ENCODE measurements at regions of chr14 and their contacts with region 1.

Region 1: GRCh38 chr14:22570132-22570949 is 18.7 kb downstream of the DAD1 start:
- DNase-seq: peak; percentile 89 to 92
- H3K4me3 ChIP-seq: no peak overlapping the region
- H3K4me3 Mint-ChIP-seq: no peak overlapping the region
- H3K27ac Mint-ChIP-seq: peak overlapping the region; percentile 29
- H3K4me1 ChIP-seq: peaks cover 56% of the 10 kb centered on the region
- H3K4me1 Mint-ChIP-seq: peaks cover 40% of the 10 kb centered on the region
- H3K27me3 ChIP-seq: no peaks in the 10 kb centered on the region
- H3K27me3 Mint-ChIP-seq: no peaks in the 10 kb centered on the region
- CTCF ChIP-seq: peak; percentile 88 to 93

Region 2: GRCh38 chr14:22556990-22557623 is 13.2 kb before region 1 on chr14:
- CTCF ChIA-PET with region 1: interaction called, 62 read pairs
- POLR2A ChIA-PET with region 1: interaction called, 5 read pairs
- intact Hi-C with region 1: loop called (anchors 1 kb)
- DNase-seq: peak; percentile 86 to 90
- H3K4me3 ChIP-seq: peak overlapping the region; percentile 21
- H3K4me3 Mint-ChIP-seq: peak overlapping the region; percentile 47
- H3K27ac Mint-ChIP-seq: peak overlapping the region; percentile 95
- H3K4me1 ChIP-seq: peaks cover 53% of the 10 kb centered on the region
- H3K4me1 Mint-ChIP-seq: peaks cover 42% of the 10 kb centered on the region
- H3K27me3 ChIP-seq: no peaks in the 10 kb centered on the region
- H3K27me3 Mint-ChIP-seq: no peaks in the 10 kb centered on the region
- CTCF ChIP-seq: peak; percentile 86 to 99

Region 3: DNA sequence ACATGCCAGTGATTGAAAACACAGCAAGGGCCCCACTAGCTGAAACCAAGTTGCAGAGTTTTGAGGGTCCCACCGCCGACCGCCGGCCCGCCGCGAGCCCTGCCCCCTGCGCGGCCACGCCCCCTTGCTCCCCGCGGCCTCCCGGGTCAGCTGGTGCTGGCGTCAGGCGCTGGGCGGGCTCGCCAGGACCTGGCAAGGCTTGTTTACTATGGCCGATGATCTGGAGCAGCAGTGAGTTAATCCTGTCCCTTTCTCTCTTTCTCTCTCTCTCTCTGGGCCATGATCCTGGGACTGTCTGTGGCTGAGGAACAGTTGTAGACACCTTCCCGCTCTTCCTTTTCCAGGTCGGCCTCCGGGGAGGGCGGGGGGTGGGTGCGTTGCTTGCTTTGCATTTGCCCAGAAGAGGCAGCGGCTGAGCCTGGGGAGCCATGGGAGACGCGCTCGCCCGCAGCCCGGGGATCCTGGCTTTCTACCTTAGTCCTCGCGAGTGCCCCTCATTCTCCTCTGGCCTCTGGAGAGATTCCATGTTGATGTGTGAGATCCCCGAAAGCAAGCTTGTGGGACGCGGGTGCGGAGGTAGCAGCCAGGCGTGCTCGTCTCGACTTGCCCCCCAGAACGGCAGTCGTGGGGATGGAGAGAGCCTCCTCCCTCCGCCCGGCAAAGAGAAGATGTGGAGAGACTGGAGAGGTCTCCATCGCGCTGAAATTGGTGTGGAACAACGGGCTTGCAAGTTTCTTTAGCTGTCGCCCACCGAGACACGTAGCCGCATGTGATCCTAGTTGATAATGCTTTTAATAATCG is 28.0 kb after region 1 on chr14 and contains the start of gene ABHD4:
- CTCF ChIA-PET with region 1: interaction called, 9 read pairs
- POLR2A ChIA-PET with region 1: no interaction called
- intact Hi-C with region 1: loop called (anchors 2 kb)
- DNase-seq: peak; percentile 74 to 85
- H3K4me3 ChIP-seq: peak within 1 kb of the TSS; percentile 84
- H3K4me3 Mint-ChIP-seq: peak within 1 kb of the TSS; percentile 97
- H3K27ac Mint-ChIP-seq: peak within 1 kb of the TSS; percentile 94
- H3K4me1 ChIP-seq: peaks cover 55% of the 10 kb centered on the region
- H3K4me1 Mint-ChIP-seq: peaks cover 19% of the 10 kb centered on the region
- H3K27me3 ChIP-seq: no peaks in the 10 kb centered on the region
- H3K27me3 Mint-ChIP-seq: no peaks in the 10 kb centered on the region
- CTCF ChIP-seq: no peak
- total RNA-seq, gene ABHD4: 64.5 and 73.5 TPM in 2 replicates

Region 4: DNA sequence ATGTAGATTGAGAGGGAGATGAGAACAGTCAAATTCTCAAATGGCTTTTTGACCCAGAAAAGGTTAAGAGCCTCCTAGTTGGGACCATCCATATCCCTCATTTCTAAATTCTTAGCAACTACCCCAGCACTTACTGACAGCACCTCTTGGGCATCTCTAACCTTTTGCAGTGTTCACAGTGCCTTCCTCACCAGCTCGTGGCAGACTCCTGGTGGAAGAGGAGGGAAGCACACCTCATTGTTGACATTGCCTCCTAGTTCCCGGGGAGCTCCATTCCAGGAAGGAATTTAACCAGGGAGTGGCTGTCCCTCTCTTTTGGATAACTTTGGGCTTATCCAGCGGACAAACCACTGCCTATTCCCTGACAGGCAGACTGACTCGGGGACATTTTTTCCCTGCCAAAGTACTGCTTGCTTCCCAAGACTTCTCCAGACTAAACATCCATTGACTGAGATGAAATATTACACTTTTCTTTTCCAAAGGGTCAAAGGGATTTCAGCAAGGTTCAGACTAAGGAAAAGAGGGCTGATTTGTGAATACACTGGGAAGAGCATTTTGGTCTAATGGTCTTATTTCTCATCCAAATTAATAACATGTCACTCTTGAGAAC is 82.8 kb after region 1 on chr14:
- CTCF ChIA-PET with region 1: interaction called, 113 read pairs
- POLR2A ChIA-PET with region 1: interaction called, 3 read pairs
- intact Hi-C with region 1: loop called (anchors 1 kb)
- DNase-seq: peak; percentile 85 to 86
- H3K4me3 ChIP-seq: no peak overlapping the region
- H3K4me3 Mint-ChIP-seq: no peak overlapping the region
- H3K27ac Mint-ChIP-seq: peak overlapping the region; percentile 68
- H3K4me1 ChIP-seq: peaks cover 31% of the 10 kb centered on the region
- H3K4me1 Mint-ChIP-seq: peaks cover 12% of the 10 kb centered on the region
- H3K27me3 ChIP-seq: no peaks in the 10 kb centered on the region
- H3K27me3 Mint-ChIP-seq: no peaks in the 10 kb centered on the region
- CTCF ChIP-seq: peak; percentile 80 to 91

Region 5: DNA sequence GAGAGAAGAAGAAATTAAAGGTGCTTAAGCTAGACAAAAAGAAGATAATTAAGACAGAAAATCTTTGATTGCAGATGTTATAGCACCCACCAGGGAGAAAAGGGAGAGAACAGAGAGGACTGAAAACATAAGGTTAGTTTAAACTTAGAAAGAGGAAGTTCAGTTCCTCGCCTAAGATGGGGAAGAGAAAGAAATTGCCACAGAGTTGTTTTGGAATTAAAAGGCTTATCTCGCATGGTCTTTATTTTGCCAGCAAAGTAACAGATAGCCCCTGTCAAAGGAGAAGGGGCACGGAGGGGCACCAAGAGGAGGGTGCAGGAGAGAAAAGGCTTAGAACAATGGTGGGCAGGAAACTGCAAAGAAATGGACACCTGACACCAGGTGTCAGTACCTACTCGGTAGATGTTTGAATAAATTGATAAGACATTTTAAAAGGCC is 178.3 kb after region 1 on chr14:
- CTCF ChIA-PET with region 1: interaction called, 5 read pairs
- POLR2A ChIA-PET with region 1: no interaction called
- intact Hi-C with region 1: loop called (anchors 5 kb)
- DNase-seq: no peak
- H3K4me3 ChIP-seq: no peak overlapping the region
- H3K4me3 Mint-ChIP-seq: no peak overlapping the region
- H3K27ac Mint-ChIP-seq: no peak overlapping the region
- H3K4me1 ChIP-seq: peaks cover 20% of the 10 kb centered on the region
- H3K4me1 Mint-ChIP-seq: peaks cover 31% of the 10 kb centered on the region
- H3K27me3 ChIP-seq: no peaks in the 10 kb centered on the region
- H3K27me3 Mint-ChIP-seq: no peaks in the 10 kb centered on the region
- CTCF ChIP-seq: peak in 1 of 2 experiments; percentile 4

Region 6: DNA sequence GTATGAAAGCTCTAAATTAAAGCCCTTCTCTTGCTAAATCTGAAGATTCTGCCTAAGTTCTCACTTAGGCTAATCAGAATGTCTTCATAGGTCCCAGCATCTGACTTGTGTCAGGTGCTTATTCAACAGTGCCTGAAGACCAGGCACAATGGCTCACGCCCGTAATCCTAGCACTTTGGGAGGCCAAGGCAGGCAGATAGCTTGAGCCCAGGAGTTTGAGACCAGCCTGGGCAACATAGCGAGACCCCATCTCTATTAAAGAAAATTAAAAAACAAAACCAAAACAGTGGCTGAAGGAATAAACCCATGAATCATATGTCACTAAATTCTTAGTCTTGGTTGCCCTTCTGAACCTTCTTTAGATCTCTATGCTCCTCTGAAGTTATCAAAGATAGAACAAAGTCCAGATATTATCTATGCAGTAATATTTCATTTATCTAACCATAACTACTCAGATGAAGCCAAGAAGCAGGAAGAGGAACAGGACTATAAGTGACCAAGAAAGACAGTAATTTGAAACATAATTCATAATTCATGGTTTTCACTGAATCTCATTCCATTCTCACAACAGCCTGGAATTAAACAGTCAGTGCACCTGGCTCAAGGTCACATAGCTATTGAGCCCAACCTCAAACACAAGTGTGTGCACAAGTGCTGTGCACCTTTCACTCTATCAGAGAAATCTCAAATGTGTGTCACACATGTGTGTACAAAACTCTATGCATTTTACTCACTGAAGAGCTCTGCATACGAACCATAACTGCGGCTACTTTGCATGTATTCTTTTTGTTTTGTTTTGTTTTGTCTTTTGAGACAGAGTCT is 238.3 kb after region 1 on chr14:
- CTCF ChIA-PET with region 1: interaction called, 8 read pairs
- POLR2A ChIA-PET with region 1: interaction called, 15 read pairs
- intact Hi-C with region 1: loop called (anchors 5 kb)
- DNase-seq: no peak
- H3K4me3 ChIP-seq: no peak overlapping the region
- H3K4me3 Mint-ChIP-seq: peak overlapping the region; percentile 68
- H3K27ac Mint-ChIP-seq: peak overlapping the region; percentile 92
- H3K4me1 ChIP-seq: peaks cover 58% of the 10 kb centered on the region
- H3K4me1 Mint-ChIP-seq: peaks cover 44% of the 10 kb centered on the region
- H3K27me3 ChIP-seq: no peaks in the 10 kb centered on the region
- H3K27me3 Mint-ChIP-seq: no peaks in the 10 kb centered on the region
- CTCF ChIP-seq: no peak

Region 7: GRCh38 chr14:22900081-22900799 is 329.9 kb after region 1 on chr14:
- CTCF ChIA-PET with region 1: interaction called, 5 read pairs
- POLR2A ChIA-PET with region 1: no interaction called
- intact Hi-C with region 1: loop called (anchors 1 kb)
- DNase-seq: peak; percentile 57 to 64
- H3K4me3 ChIP-seq: no peak overlapping the region
- H3K4me3 Mint-ChIP-seq: no peak overlapping the region
- H3K27ac Mint-ChIP-seq: no peak overlapping the region
- H3K4me1 ChIP-seq: 0 out of 2 replicates have a peak, but pooled peaks cover 7% of the 10 kb centered on the region
- H3K4me1 Mint-ChIP-seq: no peaks in the 10 kb centered on the region
- H3K27me3 ChIP-seq: no peaks in the 10 kb centered on the region
- H3K27me3 Mint-ChIP-seq: no peaks in the 10 kb centered on the region
- CTCF ChIP-seq: peak; percentile 46 to 70